H1 (cell line): ENCODE measurements at regions of chr10 and their contacts with region 1.

Region 1: DNA sequence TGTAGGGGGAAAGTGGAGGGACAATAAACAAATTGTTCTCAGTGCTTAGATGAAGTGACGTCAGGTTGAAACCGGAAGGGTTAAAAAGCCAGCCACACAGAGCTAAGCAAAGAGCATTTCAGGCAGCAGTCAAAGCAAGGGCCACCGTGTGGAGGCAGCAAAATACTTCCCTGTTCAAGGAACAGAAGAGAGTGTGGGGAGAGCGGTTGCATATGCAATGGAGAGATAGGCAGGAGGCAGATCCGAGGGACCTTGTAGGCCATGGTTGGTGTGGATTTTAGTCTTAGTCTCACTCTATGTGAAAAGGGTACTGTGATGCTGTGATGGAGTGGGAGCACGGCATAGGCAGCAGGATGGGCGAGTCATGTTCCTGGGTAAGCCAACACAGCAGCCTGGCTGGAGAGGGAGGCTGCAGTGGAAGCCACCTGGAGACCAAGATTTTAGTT is 3.8 kb upstream of the STN1 start:
- DNase-seq: no peak
- H3K4me3 ChIP-seq: no peak overlapping the region
- H3K27ac ChIP-seq: no peak overlapping the region
- H3K4me1 ChIP-seq: peaks cover 7 to 19% (median 11%) of the 10 kb centered on the region in 4 experiments
- H3K27me3 ChIP-seq: no peaks in the 10 kb centered on the region
- CTCF ChIP-seq: peak; percentile 15 to 30 (median 20); a peak in 2 of 4 replicates
- EP300 ChIP-seq: no peak
- POLR2A ChIP-seq: no peak
- RAD21 ChIP-seq: peak; percentile 40 to 49

Region 2: DNA sequence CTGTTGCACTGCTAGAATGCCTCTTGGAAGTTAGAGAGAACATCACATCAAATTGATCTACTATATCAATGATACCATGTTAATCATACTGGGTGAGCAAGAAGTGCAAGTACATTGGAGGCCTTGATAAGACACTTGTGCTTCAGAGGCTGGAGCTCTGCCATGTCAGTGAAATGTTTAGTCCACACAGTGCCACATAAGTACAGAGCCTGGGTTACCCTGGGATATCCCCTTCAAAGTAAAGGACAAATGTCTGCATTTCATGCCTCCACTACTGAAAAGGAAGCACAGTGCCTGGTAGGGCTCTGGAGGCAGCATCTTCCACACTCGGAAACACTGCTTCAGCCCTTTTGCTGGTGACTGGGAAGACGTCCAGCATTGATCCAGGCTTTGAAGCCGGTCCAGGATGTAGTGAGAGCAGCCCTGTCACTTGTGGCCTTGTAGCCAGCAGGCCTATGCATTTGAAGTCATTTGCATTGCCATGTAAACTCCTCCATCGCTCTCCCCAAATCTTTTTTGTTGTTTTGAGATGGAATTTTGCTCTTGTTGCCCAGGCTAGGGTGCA is 11.9 kb after region 1 on chr10:
- CTCF ChIA-PET with region 1: interaction called, 10 read pairs
- POLR2A ChIA-PET with region 1: interaction called, 6 read pairs
- DNase-seq: no peak
- H3K4me3 ChIP-seq: no peak overlapping the region
- H3K27ac ChIP-seq: no peak overlapping the region
- H3K4me1 ChIP-seq: peaks cover 0 to 5% (median 3%) of the 10 kb centered on the region in 4 experiments; a peak in 4 of 7 replicates
- H3K27me3 ChIP-seq: no peaks in the 10 kb centered on the region
- CTCF ChIP-seq: no peak
- EP300 ChIP-seq: no peak
- POLR2A ChIP-seq: no peak
- RAD21 ChIP-seq: no peak